GM23248 (cell line): ENCODE measurements at regions of chr16 and their contacts with region 1.

Region 1: GRCh38 chr16:53014287-53014686 is 38.4 kb downstream of the CHD9NB start:
- DNase-seq: no peak
- H3K4me3 ChIP-seq: no peak overlapping the region
- H3K27ac ChIP-seq: no peak overlapping the region
- H3K4me1 ChIP-seq: no peaks in the 10 kb centered on the region
- H3K27me3 ChIP-seq: no peaks in the 10 kb centered on the region

Region 2: GRCh38 chr16:52184336-52184735 is 830.0 kb before region 1 on chr16:
- in situ Hi-C with region 1: loop called (anchors 10 kb)
- DNase-seq: no peak
- H3K4me3 ChIP-seq: no peak overlapping the region
- H3K27ac ChIP-seq: no peak overlapping the region
- H3K4me1 ChIP-seq: no peaks in the 10 kb centered on the region
- H3K27me3 ChIP-seq: no peaks in the 10 kb centered on the region

Region 3: DNA sequence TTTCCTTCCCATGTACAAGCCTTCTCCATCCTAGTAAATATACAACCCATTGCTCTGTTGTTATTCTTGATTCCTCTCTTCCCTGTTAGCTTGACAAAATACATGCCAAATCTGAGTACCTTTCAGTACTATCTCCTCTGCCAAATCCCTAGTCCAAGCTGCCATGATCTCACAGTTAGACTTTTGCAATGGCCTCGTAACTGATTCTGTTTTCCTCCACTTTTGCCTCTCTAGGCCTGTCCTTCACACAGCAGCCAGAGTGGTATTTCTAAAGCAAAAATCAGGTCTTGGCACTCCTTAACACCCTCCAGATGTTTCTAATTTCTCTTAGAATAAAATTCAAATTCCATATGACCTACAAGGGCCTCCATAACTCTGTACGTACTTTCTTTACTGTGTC is 267.0 kb after region 1 on chr16:
- in situ Hi-C with region 1: no loop called
- DNase-seq: no peak
- H3K4me3 ChIP-seq: no peak overlapping the region
- H3K27ac ChIP-seq: no peak overlapping the region
- H3K4me1 ChIP-seq: no peaks in the 10 kb centered on the region; the same call in 1 of the 2 replicates
- H3K27me3 ChIP-seq: no peaks in the 10 kb centered on the region

Region 4: DNA sequence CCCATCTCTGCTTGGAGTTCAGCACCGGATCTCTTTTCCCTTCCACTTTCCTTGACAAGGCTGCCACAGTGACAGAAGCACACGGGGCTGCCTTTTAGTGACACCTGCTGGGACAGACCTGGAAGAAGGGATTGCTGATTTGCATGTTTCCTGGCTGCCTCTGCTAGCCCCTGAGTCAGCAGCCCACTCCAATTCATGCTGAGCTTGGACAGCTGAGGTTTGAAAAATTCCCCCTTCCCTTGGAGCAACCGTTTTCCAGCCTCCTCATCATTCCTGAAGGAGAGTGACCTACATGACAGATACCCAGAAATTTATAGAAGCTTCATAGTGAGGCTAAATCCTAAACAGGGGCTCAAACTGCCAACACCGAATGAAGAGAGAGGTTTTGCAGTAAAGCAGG is 401.2 kb after region 1 on chr16:
- in situ Hi-C with region 1: no loop called
- DNase-seq: no peak
- H3K4me3 ChIP-seq: no peak overlapping the region
- H3K27ac ChIP-seq: no peak overlapping the region
- H3K4me1 ChIP-seq: no peaks in the 10 kb centered on the region
- H3K27me3 ChIP-seq: no peaks in the 10 kb centered on the region